ENCODE measurements at regions of chr5 and their contacts with region 1.

Region 1: DNA sequence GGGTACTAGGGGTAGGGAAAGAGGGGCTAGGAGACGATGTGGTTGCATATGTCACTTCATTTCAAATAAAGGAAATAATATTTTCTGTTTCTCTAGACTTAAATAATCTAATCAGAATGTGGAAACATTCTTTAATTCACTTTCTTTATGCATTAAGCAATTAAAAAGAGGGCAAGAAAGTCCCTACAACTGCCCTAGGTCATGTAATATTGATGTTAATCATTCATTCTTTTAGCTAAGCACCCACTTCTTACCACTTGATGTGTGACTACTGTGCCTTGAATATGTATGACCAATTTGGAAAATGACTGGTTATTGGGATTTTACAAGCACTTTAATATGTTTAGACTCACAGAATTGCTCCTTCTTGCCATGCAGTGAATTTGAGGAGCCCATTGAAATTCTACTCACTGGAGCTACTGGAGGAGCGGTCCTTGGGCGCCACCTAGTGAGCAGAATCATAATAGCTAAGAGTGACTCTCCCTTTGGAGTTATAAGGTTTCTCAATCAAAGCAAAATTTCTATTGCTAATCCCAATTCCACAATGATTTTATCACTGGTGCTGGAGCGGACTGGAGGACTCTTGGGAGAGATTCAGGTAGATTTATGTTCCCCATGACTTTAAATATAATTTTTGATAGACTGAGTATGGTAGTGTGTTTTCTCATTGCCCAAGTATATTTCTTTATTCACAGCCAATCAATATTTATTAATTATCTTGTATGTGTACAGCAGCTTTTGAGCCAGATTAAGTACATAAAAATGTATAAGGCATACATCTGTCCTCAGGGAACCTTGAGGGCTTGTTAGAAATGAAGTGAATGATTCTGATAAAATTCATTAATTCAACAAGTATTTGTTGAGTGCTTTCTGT is 225.1 kb downstream of the ADGRV1 start:
- DNase-seq: peak; percentile 89
- ATAC-seq: peak; percentile 98
- H3K4me3 ChIP-seq: no peak overlapping the region
- H3K27ac ChIP-seq: no peak overlapping the region
- H3K4me1 ChIP-seq: no peaks in the 10 kb centered on the region
- H3K27me3 ChIP-seq: no peaks in the 10 kb centered on the region
- CTCF ChIP-seq: peak; percentile 98

Region 2: DNA sequence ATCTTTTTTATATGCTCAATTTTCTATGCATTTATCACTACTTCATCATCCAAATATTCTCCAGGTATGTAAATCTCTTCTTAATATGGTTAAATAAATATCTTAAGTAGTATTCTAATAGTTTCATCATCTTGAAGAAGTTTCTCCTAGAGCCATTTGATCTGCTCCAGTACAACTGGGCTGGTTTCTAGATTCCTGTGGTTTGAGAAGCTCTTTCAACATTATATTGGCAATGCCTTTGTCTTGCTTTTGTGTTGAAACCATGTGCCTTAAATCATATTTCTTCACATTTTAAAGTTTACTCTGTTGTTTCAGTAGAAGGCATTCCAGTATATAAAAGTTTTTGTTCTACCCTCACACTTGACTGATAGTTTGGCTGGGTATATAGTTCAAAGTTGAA is 336.7 kb before region 1 on chr5:
- CTCF ChIA-PET with region 1: interaction called, 13 read pairs
- POLR2A ChIA-PET with region 1: no interaction called
- intact Hi-C with region 1: no loop called
- DNase-seq: no peak
- ATAC-seq: no peak
- H3K4me3 ChIP-seq: no peak overlapping the region
- H3K27ac ChIP-seq: no peak overlapping the region
- H3K4me1 ChIP-seq: no peaks in the 10 kb centered on the region
- H3K27me3 ChIP-seq: no peaks in the 10 kb centered on the region
- CTCF ChIP-seq: no peak

Region 3: DNA sequence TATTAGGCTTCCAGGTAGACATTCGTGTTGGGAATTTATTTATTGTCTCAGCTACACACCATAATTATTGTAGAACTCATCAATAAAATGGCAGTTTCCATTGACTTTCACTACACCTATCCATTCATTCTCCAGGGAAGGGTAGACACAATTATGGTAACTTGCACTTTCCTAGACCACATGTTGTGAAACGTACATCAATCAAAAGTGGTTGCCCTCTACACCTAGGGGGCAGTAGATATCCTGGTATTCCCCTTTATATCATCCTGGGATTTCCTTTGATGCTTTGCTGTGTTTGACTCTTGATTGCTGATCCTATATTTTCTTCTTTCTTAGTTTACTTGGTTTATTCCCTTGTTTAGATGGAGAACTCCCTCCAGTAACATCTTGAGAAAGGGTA is 177.2 kb before region 1 on chr5:
- CTCF ChIA-PET with region 1: interaction called, 5 read pairs
- POLR2A ChIA-PET with region 1: no interaction called
- intact Hi-C with region 1: loop called (anchors 2 kb)
- DNase-seq: peak; percentile 53
- ATAC-seq: peak; percentile 45; the same call in 1 of the 2 replicates
- H3K4me3 ChIP-seq: no peak overlapping the region
- H3K27ac ChIP-seq: no peak overlapping the region
- H3K4me1 ChIP-seq: peaks cover 11% of the 10 kb centered on the region
- H3K27me3 ChIP-seq: no peaks in the 10 kb centered on the region
- CTCF ChIP-seq: peak; percentile 86

Region 4: DNA sequence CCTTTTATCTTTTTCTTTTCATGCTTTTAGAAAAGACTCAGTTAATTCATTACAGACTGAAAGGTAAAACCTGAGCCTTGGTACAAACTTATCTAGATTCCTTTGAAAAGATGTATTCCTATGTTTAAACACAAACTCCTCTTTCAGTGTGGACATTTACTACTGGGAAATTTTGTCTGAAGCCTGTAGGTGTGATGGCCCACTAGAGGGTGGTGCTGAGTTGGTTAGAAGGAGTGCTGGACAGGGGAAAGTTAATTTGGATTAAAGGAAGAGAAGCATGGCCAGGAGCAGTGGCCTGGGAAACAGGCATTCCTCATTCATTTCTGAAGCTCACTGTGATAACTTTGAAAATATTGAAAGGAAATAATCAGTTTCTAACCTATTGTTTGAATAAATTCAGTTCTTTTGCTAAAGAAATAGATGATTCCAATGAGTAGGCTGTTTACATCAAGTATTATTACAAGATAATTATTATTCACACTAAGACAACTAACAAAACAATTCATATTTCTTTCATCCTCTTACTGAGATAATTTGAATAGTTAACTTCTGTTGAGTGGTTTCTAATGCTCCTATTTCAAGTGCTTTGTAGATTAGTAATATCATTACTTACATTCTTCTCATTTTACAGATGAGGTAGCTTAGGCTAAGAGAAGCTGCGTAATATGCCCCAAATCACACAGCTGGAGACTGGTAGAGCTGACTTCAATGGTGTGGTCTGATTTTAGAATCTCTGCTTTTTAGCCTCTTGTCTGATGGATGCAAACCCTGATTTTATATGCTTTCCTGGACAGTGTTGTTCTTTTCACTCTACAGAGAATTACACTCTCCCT is 74.2 kb before region 1 on chr5:
- CTCF ChIA-PET with region 1: interaction called, 6 read pairs
- POLR2A ChIA-PET with region 1: no interaction called
- intact Hi-C with region 1: loop called (anchors 1 kb)
- DNase-seq: peak; percentile 77
- ATAC-seq: peak; percentile 99
- H3K4me3 ChIP-seq: no peak overlapping the region
- H3K27ac ChIP-seq: no peak overlapping the region
- H3K4me1 ChIP-seq: no peaks in the 10 kb centered on the region
- H3K27me3 ChIP-seq: no peaks in the 10 kb centered on the region
- CTCF ChIP-seq: peak; percentile 97

Region 5: GRCh38 chr5:90909101-90909503 is 125.4 kb after region 1 on chr5:
- CTCF ChIA-PET with region 1: no interaction called
- POLR2A ChIA-PET with region 1: no interaction called
- intact Hi-C with region 1: no loop called
- DNase-seq: no peak
- ATAC-seq: peak; percentile 83
- H3K4me3 ChIP-seq: no peak overlapping the region
- H3K27ac ChIP-seq: no peak overlapping the region
- H3K4me1 ChIP-seq: peaks cover 18% of the 10 kb centered on the region
- H3K27me3 ChIP-seq: no peaks in the 10 kb centered on the region
- CTCF ChIP-seq: no peak